HepG2 (cell line): ENCODE measurements at regions of chr5 and their contacts with region 1.

Region 1: GRCh38 chr5:82351754-82352145 is 73.6 kb upstream of the RPS23 start:
- DNase-seq: peak; percentile 73
- ATAC-seq: peak; percentile 88
- H3K4me3 ChIP-seq: no peak overlapping the region
- H3K27ac ChIP-seq: no peak overlapping the region
- H3K4me1 ChIP-seq: peaks cover 22% of the 10 kb centered on the region
- H3K27me3 ChIP-seq: peaks cover 0 to 7% of the 10 kb centered on the region in 2 experiments; a peak in 1 of 5 replicates
- CTCF ChIP-seq: peak; percentile 88
- EP300 ChIP-seq: no peak; a peak in 1 of 4 replicates
- POLR2A ChIP-seq: no peak
- RAD21 ChIP-seq: peak; percentile 72

Region 2: GRCh38 chr5:82396871-82397514 is 45.2 kb after region 1 on chr5:
- CTCF ChIA-PET with region 1: no interaction called
- POLR2A ChIA-PET with region 1: no interaction called
- in situ Hi-C with region 1: no loop called
- intact Hi-C with region 1: no loop called
- DNase-seq: peak; percentile 92
- ATAC-seq: peak; percentile 100
- H3K4me3 ChIP-seq: no peak overlapping the region
- H3K27ac ChIP-seq: peak overlapping the region; percentile 3
- H3K4me1 ChIP-seq: peaks cover 20% of the 10 kb centered on the region
- H3K27me3 ChIP-seq: no peaks in the 10 kb centered on the region
- CTCF ChIP-seq: peak; percentile 56
- EP300 ChIP-seq: peak in 1 of 2 experiments; percentile 73; a peak in 2 of 4 replicates
- POLR2A ChIP-seq: no peak
- RAD21 ChIP-seq: no peak

Region 3: DNA sequence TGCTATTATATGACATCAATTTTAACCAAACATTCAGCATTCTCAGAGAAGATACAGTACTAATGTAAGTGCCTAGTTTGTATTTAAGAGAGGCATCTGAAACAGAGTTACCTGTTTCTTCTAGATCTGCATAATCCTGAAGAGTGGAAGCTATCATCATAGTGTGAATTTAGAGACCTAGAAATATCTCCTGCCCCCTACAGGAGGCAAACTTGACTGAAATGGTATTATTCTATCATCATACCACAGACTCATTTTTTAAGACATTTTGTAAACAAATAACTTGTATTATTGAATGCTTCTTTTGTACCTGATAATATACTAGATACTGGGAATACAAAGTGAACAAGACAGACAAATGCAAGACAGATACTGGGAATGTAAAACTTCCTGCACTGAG is 143.2 kb after region 1 on chr5:
- CTCF ChIA-PET with region 1: no interaction called
- POLR2A ChIA-PET with region 1: no interaction called
- in situ Hi-C with region 1: no loop called
- intact Hi-C with region 1: loop called (anchors 10 kb)
- DNase-seq: no peak
- ATAC-seq: no peak
- H3K4me3 ChIP-seq: no peak overlapping the region
- H3K27ac ChIP-seq: no peak overlapping the region
- H3K4me1 ChIP-seq: peaks cover 4% of the 10 kb centered on the region
- H3K27me3 ChIP-seq: no peaks in the 10 kb centered on the region
- CTCF ChIP-seq: no peak; the same call in 1 of the 2 replicates
- EP300 ChIP-seq: no peak
- POLR2A ChIP-seq: no peak
- RAD21 ChIP-seq: no peak

Region 4: GRCh38 chr5:82641331-82642003 is 289.7 kb after region 1 on chr5:
- CTCF ChIA-PET with region 1: interaction called, 9 read pairs
- POLR2A ChIA-PET with region 1: no interaction called
- in situ Hi-C with region 1: loop called (anchors 25 kb)
- intact Hi-C with region 1: loop called (anchors 1 kb)
- DNase-seq: peak; percentile 82
- ATAC-seq: peak; percentile 91
- H3K4me3 ChIP-seq: no peak overlapping the region
- H3K27ac ChIP-seq: no peak overlapping the region
- H3K4me1 ChIP-seq: peaks cover 20% of the 10 kb centered on the region
- H3K27me3 ChIP-seq: no peaks in the 10 kb centered on the region
- CTCF ChIP-seq: peak; percentile 86
- EP300 ChIP-seq: no peak; a peak in 1 of 4 replicates
- POLR2A ChIP-seq: no peak
- RAD21 ChIP-seq: peak; percentile 50; the same call in 1 of the 2 replicates

Region 5: GRCh38 chr5:83076742-83077661 is 725.3 kb after region 1 on chr5 and contains the starts of genes TMEM167A and XRCC4:
- CTCF ChIA-PET with region 1: no interaction called
- POLR2A ChIA-PET with region 1: no interaction called
- in situ Hi-C with region 1: loop called (anchors 25 kb)
- intact Hi-C with region 1: loop called (anchors 10 kb)
- DNase-seq: peak; percentile 99
- ATAC-seq: peak; percentile 99
- H3K4me3 ChIP-seq: peak within 1 kb of the TSS; percentile 83 to 94 (median 90)
- H3K27ac ChIP-seq: peak within 1 kb of the TSS; percentile 94
- H3K4me1 ChIP-seq: peaks cover 49% of the 10 kb centered on the region
- H3K27me3 ChIP-seq: no peaks in the 10 kb centered on the region; a peak in 1 of 5 replicates
- CTCF ChIP-seq: no peak
- EP300 ChIP-seq: no peak
- POLR2A ChIP-seq: peak; percentile 92 to 98
- RAD21 ChIP-seq: peak; percentile 41; the same call in 1 of the 2 replicates
- total RNA-seq, gene TMEM167A: 78.7 and 122 TPM in 2 replicates
- total RNA-seq, gene XRCC4: 12.6 and 21.8 TPM in 2 replicates

Region 6: GRCh38 chr5:83473346-83474163 is 1121.8 kb after region 1 on chr5:
- CTCF ChIA-PET with region 1: no interaction called
- POLR2A ChIA-PET with region 1: no interaction called
- in situ Hi-C with region 1: loop called (anchors 10 kb)
- intact Hi-C with region 1: no loop called
- DNase-seq: no peak
- ATAC-seq: peak; percentile 67
- H3K4me3 ChIP-seq: peak overlapping the region; percentile 36 to 68 (median 46); a peak in 5 of 6 replicates
- H3K27ac ChIP-seq: no peak overlapping the region
- H3K4me1 ChIP-seq: peaks cover 71% of the 10 kb centered on the region
- H3K27me3 ChIP-seq: peaks cover 3 to 43% of the 10 kb centered on the region in 2 experiments; a peak in 4 of 5 replicates
- CTCF ChIP-seq: peak; percentile 80
- EP300 ChIP-seq: no peak
- POLR2A ChIP-seq: no peak
- RAD21 ChIP-seq: peak; percentile 57; the same call in 1 of the 2 replicates